GM13977 (cell line): ENCODE measurements at regions of chr5 and their contacts with region 1.

Region 1: GRCh38 chr5:42057254-42057690 is 132.2 kb downstream of the FBXO4 start:
- DNase-seq: peak; percentile 50
- CTCF ChIP-seq: peak; percentile 85

Region 2: GRCh38 chr5:41695920-41696582 is 361.2 kb before region 1 on chr5:
- in situ Hi-C with region 1: loop called (anchors 25 kb)
- DNase-seq: peak; percentile 7
- CTCF ChIP-seq: peak; percentile 53

Region 3: GRCh38 chr5:41856644-41857491 is 200.4 kb before region 1 on chr5:
- in situ Hi-C with region 1: loop called (anchors 10 kb)
- DNase-seq: peak; percentile 36
- CTCF ChIP-seq: peak; percentile 76

Region 4: DNA sequence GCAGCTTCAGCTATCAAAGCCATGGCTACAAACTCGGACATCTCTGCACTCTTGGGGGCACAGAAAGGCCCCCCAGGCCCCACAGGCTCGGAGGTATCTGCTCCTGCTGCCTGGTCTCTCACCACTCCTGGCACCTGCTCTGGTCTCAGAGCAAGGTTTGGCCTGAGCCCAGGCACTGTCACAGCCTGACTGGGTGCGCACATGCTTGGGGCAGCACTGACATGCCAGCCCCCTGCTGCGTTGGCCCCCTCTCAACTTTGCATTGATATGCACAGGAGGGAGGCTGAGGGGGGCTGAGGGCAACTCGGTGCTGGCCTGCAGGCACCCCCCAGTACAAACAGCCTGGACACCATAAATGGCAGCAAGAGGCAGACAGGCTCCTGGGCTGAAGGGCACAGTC is 338.8 kb after region 1 on chr5:
- in situ Hi-C with region 1: no loop called
- DNase-seq: no peak
- CTCF ChIP-seq: no peak